ENCODE measurements at regions of chr10 and their contacts with region 1.

Region 1: GRCh38 chr10:21265621-21266020 is 259.9 kb downstream of the SKIDA1 start:
- DNase-seq: no peak
- H3K4me3 ChIP-seq: no peak overlapping the region
- H3K4me1 ChIP-seq: no peaks in the 10 kb centered on the region
- H3K27me3 ChIP-seq: no peaks in the 10 kb centered on the region

Region 2: DNA sequence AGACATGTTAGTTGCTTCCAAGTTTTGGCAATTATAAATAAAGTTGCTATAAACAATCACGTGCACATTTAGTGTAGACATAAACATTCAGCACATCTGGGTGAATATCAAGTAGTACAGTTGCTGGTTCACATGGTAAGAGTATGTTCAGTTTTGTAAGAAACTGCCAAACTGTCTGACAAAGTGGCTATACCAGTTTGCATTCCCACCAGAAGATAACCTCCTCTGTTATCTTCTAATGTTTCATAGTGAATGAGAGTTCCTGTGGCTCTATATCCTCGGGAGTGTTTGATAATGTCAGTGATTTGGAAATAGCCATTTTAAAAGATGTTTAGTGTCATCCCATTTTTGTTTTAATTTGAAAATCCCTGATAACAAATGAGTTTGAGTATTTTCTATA is 1709.0 kb before region 1 on chr10:
- in situ Hi-C with region 1: no loop called
- DNase-seq: no peak
- H3K4me3 ChIP-seq: no peak overlapping the region
- H3K4me1 ChIP-seq: no peaks in the 10 kb centered on the region
- H3K27me3 ChIP-seq: no peaks in the 10 kb centered on the region

Region 3: GRCh38 chr10:20795391-20795790 is 470.2 kb before region 1 on chr10:
- in situ Hi-C with region 1: no loop called
- DNase-seq: no peak
- H3K4me3 ChIP-seq: no peak overlapping the region
- H3K4me1 ChIP-seq: no peaks in the 10 kb centered on the region
- H3K27me3 ChIP-seq: no peaks in the 10 kb centered on the region; the same call in 1 of the 2 replicates

Region 4: GRCh38 chr10:20858292-20859124 is 407.1 kb before region 1 on chr10:
- in situ Hi-C with region 1: loop called (anchors 5 kb)
- DNase-seq: peak in 1 of 2 experiments; percentile 55
- H3K4me3 ChIP-seq: no peak overlapping the region
- H3K4me1 ChIP-seq: no peaks in the 10 kb centered on the region
- H3K27me3 ChIP-seq: no peaks in the 10 kb centered on the region

Region 5: GRCh38 chr10:20885678-20886077 is 379.9 kb before region 1 on chr10:
- in situ Hi-C with region 1: loop called (anchors 10 kb)
- DNase-seq: no peak
- H3K4me3 ChIP-seq: no peak overlapping the region
- H3K4me1 ChIP-seq: peaks cover 31% of the 10 kb centered on the region
- H3K27me3 ChIP-seq: peaks cover 6% of the 10 kb centered on the region

Region 6: DNA sequence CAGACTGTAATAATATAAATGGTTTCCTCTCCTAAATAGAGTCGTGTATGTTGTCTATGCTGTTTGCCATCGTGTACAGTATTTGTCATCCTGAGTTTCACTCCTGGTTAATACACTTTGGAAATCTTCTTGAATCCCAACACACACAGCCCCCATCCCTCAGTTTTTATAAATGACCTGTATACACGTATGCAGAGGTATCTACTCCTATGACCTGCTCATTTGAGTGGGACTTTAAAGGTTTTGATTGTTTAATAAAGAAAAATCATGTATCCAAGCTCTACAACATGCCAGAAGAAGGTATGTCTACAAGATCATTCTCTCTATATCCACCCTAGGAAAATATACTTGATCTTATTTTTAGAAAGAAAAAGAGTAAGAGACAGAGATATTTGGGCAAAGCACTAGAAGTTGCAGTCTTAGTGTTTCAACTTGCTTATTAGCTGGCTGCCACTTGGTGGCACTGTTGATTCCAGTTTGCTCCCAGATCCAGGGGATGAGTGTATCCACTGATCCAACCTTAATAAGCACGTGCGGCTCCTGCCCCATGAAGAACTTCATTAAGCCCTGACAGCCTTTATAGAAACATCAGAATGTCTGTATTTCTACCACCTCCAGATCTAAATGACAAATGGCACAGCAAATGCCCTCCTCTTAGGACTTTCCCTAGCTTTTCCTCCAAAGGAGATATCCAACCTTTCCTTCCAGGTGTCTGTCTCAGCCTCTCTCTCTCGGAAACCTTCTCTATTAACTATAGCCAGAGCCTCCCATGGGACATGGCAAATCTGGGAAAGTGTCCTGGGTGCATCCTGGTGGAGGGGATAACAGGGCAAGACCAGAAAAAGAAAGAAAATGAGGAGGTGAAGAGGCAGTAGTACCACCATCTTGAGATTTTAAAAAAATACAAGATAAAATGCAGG is 187.0 kb before region 1 on chr10:
- in situ Hi-C with region 1: loop called (anchors 5 kb)
- DNase-seq: peak; percentile 57 to 80
- H3K4me3 ChIP-seq: no peak overlapping the region
- H3K4me1 ChIP-seq: no peaks in the 10 kb centered on the region
- H3K27me3 ChIP-seq: peaks cover 5% of the 10 kb centered on the region; the same call in 1 of the 2 replicates

Measured in HAP-1 (cell line).